BJ (cell line): ENCODE measurements at regions of chr11 and their contacts with region 1.

Region 1: DNA sequence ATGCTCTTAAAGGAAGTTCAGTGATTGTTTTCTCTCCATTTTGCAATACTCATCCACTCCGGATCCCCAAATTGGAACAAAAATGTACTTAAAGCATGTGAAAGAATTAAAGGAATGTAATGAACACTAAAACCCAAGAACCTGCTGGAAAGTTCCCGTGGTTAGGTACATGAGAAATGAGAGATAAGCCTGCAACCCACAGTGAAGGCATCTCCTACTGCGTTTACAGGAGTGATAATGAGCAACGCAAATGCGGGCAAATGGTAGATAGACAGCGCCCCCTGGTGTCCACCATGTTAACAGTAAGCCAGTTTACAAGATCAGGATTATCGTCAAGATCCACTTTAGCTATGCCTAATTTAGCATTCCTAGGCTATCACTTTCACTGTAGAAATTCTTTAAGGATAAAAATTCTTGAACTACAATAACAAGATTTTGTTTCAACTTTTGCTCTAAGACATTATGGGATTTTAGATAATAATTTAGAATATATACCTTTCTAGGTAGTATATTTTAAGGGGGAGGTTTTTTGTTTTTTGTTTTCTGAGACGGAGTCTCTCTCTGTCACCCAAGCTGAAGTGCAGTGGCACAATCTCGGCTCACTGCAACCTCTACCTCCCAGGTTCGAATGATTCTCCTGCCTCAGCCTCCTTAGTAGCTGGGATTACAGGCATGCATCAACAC is 29.9 kb downstream of the ALG9 start:
- DNase-seq: peak; percentile 86
- H3K4me3 ChIP-seq: no peak overlapping the region
- H3K27me3 ChIP-seq: no peaks in the 10 kb centered on the region
- CTCF ChIP-seq: peak; percentile 76

Region 2: GRCh38 chr11:111793863-111794262 is 47.6 kb before region 1 on chr11:
- CTCF ChIA-PET with region 1: interaction called, 13 read pairs
- POLR2A ChIA-PET with region 1: no interaction called
- DNase-seq: peak; percentile 90
- H3K4me3 ChIP-seq: no peak overlapping the region
- H3K27me3 ChIP-seq: no peaks in the 10 kb centered on the region
- CTCF ChIP-seq: no peak